IMR-90 (cell line): ENCODE measurements at regions of chr22 and their contacts with region 1.

Region 1: DNA sequence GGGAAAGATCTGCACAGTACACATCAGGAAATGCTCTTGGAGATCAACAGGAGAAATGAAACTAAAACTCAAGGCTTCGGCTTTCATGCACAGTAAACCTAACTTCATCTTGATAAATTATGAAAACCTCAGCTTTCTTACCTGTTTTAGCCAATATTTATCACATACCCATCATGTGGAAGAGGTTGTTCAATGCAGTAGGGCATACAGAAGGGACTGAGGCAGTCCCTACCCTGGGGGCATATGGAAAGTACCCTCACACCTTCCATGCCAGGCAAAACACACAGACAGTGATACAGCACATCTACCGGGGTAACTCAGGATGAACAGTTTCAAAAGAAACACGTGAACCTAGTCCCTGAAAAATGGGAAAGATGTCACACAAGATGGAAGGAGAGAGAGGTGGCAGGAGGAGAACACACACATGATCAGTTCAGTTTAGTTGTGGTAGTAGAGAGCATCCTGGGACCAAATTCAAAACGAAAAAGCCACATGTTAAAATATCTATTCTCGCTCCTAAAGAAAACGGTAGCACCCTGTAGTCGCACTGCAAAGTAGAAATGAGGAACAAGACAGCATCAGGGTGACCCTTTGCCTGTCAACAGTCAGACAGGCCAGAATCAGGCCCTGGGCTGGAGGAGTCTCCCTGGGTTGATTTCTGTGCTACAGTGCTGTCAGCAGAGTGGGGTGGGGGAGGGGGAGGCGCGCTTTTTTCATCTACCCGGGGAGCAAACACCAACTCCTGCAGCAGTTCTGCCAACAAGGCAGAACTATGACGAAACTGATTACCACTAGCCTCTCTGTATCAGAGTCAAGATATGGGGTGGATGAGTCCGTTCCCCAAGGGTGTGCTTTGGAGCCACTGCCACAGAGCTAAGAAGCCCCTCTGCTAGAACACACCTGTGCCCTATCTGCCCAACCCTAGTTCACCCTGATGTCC is 1.3 kb downstream of the HIRA start:
- DNase-seq: peak; percentile 78
- ATAC-seq: peak; percentile 2
- H3K4me3 ChIP-seq: peak overlapping the region; percentile 81
- H3K27ac ChIP-seq: peak overlapping the region; percentile 54
- H3K4me1 ChIP-seq: peaks cover 3% of the 10 kb centered on the region
- H3K27me3 ChIP-seq: no peaks in the 10 kb centered on the region
- CTCF ChIP-seq: no peak
- POLR2A ChIP-seq: no peak; the same call in 1 of the 2 replicates
- RAD21 ChIP-seq: no peak

Region 2: GRCh38 chr22:19291580-19292457 is 138.4 kb before region 1 on chr22 and contains the start of gene CLTCL1:
- CTCF ChIA-PET with region 1: no interaction called
- POLR2A ChIA-PET with region 1: no interaction called
- dilution Hi-C with region 1: no loop called
- in situ Hi-C with region 1: no loop called
- intact Hi-C with region 1: loop called (anchors 10 kb)
- DNase-seq: peak; percentile 58
- ATAC-seq: peak; percentile 91
- H3K4me3 ChIP-seq: peak within 1 kb of the TSS; percentile 80
- H3K27ac ChIP-seq: peak within 1 kb of the TSS; percentile 39
- H3K4me1 ChIP-seq: peaks cover 17% of the 10 kb centered on the region
- H3K27me3 ChIP-seq: peaks cover 3% of the 10 kb centered on the region; the same call in 1 of the 2 replicates
- CTCF ChIP-seq: no peak
- POLR2A ChIP-seq: no peak
- RAD21 ChIP-seq: no peak
- total RNA-seq, gene CLTCL1: 7.5 and 8.1 TPM in 2 replicates